ENCODE measurements at regions of chr4 and their contacts with region 1.

Region 1: DNA sequence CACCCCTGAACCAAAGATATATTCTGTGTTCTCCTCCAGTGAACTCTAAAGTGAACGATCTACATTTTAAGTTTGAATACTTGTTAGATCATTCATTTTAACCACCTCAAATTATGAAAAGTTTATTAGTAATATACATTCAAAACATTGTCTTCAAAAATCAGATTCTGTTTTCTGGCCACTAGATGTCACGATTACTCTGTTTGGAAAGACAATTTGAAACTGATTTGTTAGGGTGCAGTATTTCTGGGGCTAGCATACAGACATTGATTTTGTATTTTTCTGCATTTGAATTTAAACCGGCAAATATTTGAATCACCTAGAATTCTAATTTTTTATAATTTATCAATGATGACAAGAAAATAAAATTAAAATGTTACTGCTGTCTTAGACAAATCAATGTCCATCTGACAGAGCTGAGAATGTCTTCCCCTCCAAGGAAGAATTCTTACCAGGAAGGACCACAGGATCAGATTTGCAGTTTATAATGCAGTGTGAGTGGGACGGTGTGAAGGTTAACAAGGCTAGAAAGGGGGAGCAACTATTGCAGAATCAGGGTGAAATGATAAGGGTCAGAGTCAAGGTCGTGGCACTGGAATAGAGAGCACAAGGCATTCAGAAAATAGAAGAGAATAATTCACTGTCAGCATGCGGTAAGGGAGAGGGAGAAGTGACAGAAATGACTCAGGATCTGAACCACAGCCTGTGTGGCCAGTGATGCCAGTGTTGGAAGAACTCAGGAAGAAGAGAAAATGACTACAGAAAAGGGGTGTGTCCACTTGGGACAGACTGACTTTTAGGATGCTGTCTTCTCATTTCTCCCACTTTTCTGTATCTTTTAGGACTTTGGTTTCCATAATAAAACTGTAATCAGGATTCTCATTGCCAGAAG is 91.6 kb downstream of the ANXA10 start:
- DNase-seq: peak in 3 of 14 experiments; percentile 20 to 30 (median 26)
- ATAC-seq: no peak
- H3K4me3 ChIP-seq: no peak overlapping the region
- H3K4me3 Mint-ChIP-seq: no peak overlapping the region
- H3K27ac ChIP-seq: no peak overlapping the region
- H3K27ac Mint-ChIP-seq: no peak overlapping the region
- H3K4me1 ChIP-seq: no peaks in the 10 kb centered on the region
- H3K4me1 Mint-ChIP-seq: no peaks in the 10 kb centered on the region
- H3K27me3 ChIP-seq: no peaks in the 10 kb centered on the region
- H3K27me3 Mint-ChIP-seq: no peaks in the 10 kb centered on the region
- CTCF ChIP-seq: peak; percentile 60

Region 2: GRCh38 chr4:168353746-168354145 is 169.8 kb after region 1 on chr4:
- CTCF ChIA-PET with region 1: no interaction called
- POLR2A ChIA-PET with region 1: no interaction called
- intact Hi-C with region 1: no loop called
- DNase-seq: no peak
- ATAC-seq: no peak
- H3K4me3 ChIP-seq: no peak overlapping the region
- H3K4me3 Mint-ChIP-seq: no peak overlapping the region
- H3K27ac ChIP-seq: no peak overlapping the region
- H3K27ac Mint-ChIP-seq: no peak overlapping the region
- H3K4me1 ChIP-seq: no peaks in the 10 kb centered on the region
- H3K4me1 Mint-ChIP-seq: no peaks in the 10 kb centered on the region
- H3K27me3 ChIP-seq: no peaks in the 10 kb centered on the region
- H3K27me3 Mint-ChIP-seq: no peaks in the 10 kb centered on the region
- CTCF ChIP-seq: no peak

Region 3: GRCh38 chr4:168656055-168656660 is 472.2 kb after region 1 on chr4:
- CTCF ChIA-PET with region 1: no interaction called
- POLR2A ChIA-PET with region 1: no interaction called
- intact Hi-C with region 1: no loop called
- DNase-seq: no peak
- ATAC-seq: no peak
- H3K4me3 ChIP-seq: no peak overlapping the region
- H3K4me3 Mint-ChIP-seq: no peak overlapping the region
- H3K27ac ChIP-seq: no peak overlapping the region
- H3K27ac Mint-ChIP-seq: no peak overlapping the region
- H3K4me1 ChIP-seq: no peaks in the 10 kb centered on the region
- H3K4me1 Mint-ChIP-seq: peaks cover 8% of the 10 kb centered on the region
- H3K27me3 ChIP-seq: peaks cover 2 to 5% of the 10 kb centered on the region in 2 experiments
- H3K27me3 Mint-ChIP-seq: peaks cover 29% of the 10 kb centered on the region
- CTCF ChIP-seq: no peak

Region 4: DNA sequence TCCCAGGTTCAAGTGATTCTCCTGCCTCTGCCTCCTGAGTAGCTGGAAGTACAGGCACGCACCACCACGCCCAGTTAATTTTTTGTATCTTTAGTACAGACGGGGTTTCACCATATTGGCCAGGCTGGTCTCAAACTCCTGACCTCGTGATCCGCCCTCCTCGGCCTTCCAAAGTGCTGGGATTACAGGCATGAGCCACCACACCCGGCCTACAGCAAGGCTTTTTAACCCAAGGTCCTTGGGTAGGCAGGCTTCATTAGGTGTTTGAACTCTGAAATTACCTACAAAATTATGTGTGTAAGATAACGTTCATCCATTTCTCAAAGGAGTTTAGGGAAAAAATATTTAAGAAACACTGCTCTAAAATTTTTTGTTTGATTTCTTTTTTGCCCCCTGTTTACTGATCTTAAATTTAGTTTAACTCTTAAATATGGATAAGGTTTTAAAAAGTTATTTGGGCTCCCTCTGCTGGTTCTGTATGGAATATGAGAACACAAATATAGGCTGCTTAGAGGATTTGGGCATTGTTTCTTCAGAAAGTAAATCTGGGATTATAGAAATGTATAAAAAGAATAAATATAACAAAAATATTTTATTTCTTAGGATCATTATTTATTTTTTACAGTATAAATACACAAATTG is 733.3 kb after region 1 on chr4:
- CTCF ChIA-PET with region 1: no interaction called
- POLR2A ChIA-PET with region 1: no interaction called
- intact Hi-C with region 1: loop called (anchors 5 kb)
- DNase-seq: peak in 3 of 14 experiments; percentile 18 to 38 (median 20)
- ATAC-seq: no peak
- H3K4me3 ChIP-seq: no peak overlapping the region
- H3K4me3 Mint-ChIP-seq: no peak overlapping the region
- H3K27ac ChIP-seq: no peak overlapping the region
- H3K27ac Mint-ChIP-seq: no peak overlapping the region
- H3K4me1 ChIP-seq: no peaks in the 10 kb centered on the region
- H3K4me1 Mint-ChIP-seq: no peaks in the 10 kb centered on the region
- H3K27me3 ChIP-seq: no peaks in the 10 kb centered on the region
- H3K27me3 Mint-ChIP-seq: no peaks in the 10 kb centered on the region
- CTCF ChIP-seq: peak; percentile 48

Measured in CD4-positive, alpha-beta T cell (primary cell).